ENCODE measurements at regions of chr19 and their contacts with region 1.

Region 1: DNA sequence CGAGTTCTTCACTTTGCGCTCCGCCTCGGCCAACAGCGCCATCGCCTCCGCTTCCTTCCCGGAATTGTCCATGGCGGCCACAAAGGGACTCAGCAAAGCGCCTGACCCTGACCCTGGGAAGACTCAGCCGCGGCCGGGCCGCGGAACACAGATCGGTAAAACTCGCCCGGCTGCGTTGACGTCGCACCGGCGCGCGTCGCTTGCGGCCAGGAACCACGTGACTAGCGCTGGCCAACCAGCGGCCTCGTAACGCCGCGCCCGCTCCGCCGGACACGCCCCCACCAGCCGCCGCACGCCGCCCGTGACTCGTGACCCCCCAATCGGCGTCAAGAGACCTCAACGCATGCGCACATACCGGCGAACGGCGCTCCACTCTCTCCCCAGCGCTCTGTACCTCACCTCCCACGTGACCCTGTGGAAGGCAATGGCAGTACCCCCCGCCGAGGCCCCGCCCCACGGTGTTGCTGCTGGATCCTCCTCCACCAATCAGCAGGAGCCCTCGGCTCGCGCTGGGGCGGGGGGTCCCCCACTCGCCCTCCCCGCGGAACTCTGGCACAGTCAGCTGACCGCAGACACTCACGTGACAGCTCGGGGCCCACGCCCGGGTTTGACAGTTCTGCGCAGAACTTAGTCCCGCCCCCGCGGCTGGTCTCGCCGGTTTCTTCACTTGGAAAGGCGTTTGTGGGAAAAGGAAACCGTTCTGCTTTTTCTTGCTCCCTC is at the start of gene NAPA:
- DNase-seq: peak; percentile 99 to 100 (median 99)
- ATAC-seq: peak; percentile 97
- H3K4me3 ChIP-seq: peak within 1 kb of the TSS; percentile 96
- H3K27ac ChIP-seq: peak within 1 kb of the TSS; percentile 92
- H3K4me1 ChIP-seq: peaks cover 20 to 44% of the 10 kb centered on the region in 2 experiments
- H3K27me3 ChIP-seq: no peaks in the 10 kb centered on the region
- CTCF ChIP-seq: no peak
- EP300 ChIP-seq: peak; percentile 50
- POLR2A ChIP-seq: peak; percentile 82
- RAD21 ChIP-seq: peak in 1 of 2 experiments; percentile 72; a peak in 2 of 4 replicates
- polyA plus RNA-seq, gene NAPA: 5.4 to 22.4 TPM

Region 2: GRCh38 chr19:47483800-47484690 is 31.0 kb before region 1 on chr19 and contains the start of gene KPTN:
- CTCF ChIA-PET with region 1: no interaction called
- POLR2A ChIA-PET with region 1: interaction called, 8 read pairs
- in situ Hi-C with region 1: no loop called
- intact Hi-C with region 1: loop called (anchors 5 kb)
- DNase-seq: peak; percentile 92 to 94 (median 94)
- ATAC-seq: peak; percentile 89
- H3K4me3 ChIP-seq: peak within 1 kb of the TSS; percentile 67
- H3K27ac ChIP-seq: peak within 1 kb of the TSS; percentile 88
- H3K4me1 ChIP-seq: peaks cover 7 to 44% of the 10 kb centered on the region in 2 experiments; a peak in 3 of 5 replicates
- H3K27me3 ChIP-seq: no peaks in the 10 kb centered on the region
- CTCF ChIP-seq: peak; percentile 94 to 99 (median 97)
- EP300 ChIP-seq: no peak; the same call in 1 of the 2 replicates
- POLR2A ChIP-seq: peak; percentile 87
- RAD21 ChIP-seq: peak; percentile 69 to 83
- polyA plus RNA-seq, gene KPTN: 0.56 to 2.7 TPM

Region 3: GRCh38 chr19:47600246-47601179 is 85.5 kb after region 1 on chr19:
- CTCF ChIA-PET with region 1: no interaction called
- POLR2A ChIA-PET with region 1: interaction called, 6 read pairs
- in situ Hi-C with region 1: no loop called
- intact Hi-C with region 1: loop called (anchors 5 kb)
- DNase-seq: peak; percentile 98 to 100 (median 99)
- ATAC-seq: peak; percentile 98
- H3K4me3 ChIP-seq: peak overlapping the region; percentile 50
- H3K27ac ChIP-seq: peak overlapping the region; percentile 65
- H3K4me1 ChIP-seq: peaks cover 7 to 14% of the 10 kb centered on the region in 2 experiments; a peak in 4 of 5 replicates
- H3K27me3 ChIP-seq: no peaks in the 10 kb centered on the region
- CTCF ChIP-seq: no peak; a peak in 1 of 6 replicates
- EP300 ChIP-seq: no peak; the same call in 1 of the 2 replicates
- POLR2A ChIP-seq: peak; percentile 86
- RAD21 ChIP-seq: no peak; a peak in 1 of 4 replicates

Region 4: DNA sequence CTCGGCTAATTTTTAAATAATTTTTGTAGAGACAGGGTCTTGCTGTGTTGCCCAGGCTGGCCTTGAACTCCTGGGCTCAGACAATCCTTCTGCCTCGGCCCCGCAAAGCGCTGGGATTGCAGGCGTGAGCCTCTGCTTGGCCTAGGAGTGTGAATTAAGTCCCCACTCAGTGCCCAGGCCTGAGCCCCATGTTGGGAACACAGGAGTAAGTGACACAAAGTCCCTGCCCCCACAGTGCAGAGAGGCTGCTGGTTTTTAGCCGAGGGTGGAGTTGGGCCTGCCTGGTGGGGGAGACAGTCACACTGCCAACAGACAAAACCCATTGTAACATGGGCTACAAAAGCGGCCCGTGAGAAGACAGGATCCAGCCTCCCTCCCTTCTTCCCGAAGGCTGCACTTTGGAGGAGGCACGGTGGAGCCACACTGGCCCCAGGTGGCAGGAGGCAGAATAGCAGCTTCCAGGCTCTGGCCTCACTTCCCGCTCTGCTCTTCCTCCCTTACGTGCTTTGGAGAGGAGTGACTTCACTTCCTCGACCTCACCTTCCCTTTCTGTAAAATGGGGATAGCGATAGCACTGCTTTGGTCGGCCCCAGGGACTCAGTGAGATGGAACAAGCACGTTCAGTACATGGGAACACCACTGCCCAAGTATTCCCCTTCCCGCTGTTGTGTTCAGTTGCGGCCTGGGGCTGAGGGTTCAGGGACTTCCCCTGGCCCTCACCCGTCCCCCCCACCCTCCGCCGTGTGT is 183.0 kb after region 1 on chr19:
- CTCF ChIA-PET with region 1: no interaction called
- POLR2A ChIA-PET with region 1: no interaction called
- in situ Hi-C with region 1: no loop called
- intact Hi-C with region 1: loop called (anchors 5 kb)
- DNase-seq: peak; percentile 82 to 86 (median 83)
- ATAC-seq: peak; percentile 92
- H3K4me3 ChIP-seq: no peak overlapping the region
- H3K27ac ChIP-seq: no peak overlapping the region
- H3K4me1 ChIP-seq: peaks cover 0 to 29% of the 10 kb centered on the region in 2 experiments; a peak in 2 of 5 replicates
- H3K27me3 ChIP-seq: no peaks in the 10 kb centered on the region
- CTCF ChIP-seq: peak; percentile 93 to 99 (median 98)
- EP300 ChIP-seq: no peak
- POLR2A ChIP-seq: no peak
- RAD21 ChIP-seq: peak; percentile 95 to 98